ENCODE measurements at regions of chr5 and their contacts with region 1.

Region 1: DNA sequence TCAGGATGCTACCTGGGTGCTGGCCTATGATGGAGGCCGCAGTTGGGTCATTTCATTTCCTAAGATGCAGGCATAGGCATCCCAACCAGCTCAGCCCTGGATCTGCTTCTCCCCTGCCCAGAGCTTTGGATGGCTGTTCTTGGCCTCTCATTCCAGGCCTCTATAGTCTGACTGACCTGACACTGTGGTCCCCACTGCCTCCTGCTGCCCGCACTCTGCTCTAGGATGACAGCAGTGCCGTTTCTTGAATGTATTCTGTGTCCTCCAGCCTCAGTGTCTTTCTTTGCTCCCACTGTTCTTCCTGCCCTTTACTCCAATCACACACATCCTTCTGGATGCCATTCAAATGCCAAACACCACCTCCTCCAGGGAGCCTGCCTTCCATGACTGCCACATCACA is 235.7 kb downstream of the HSPA4 start:
- DNase-seq: peak in 1 of 2 donors; percentile 74
- ATAC-seq: peak in 1 of 2 donors; percentile 39
- H3K4me3 ChIP-seq: no peak overlapping the region
- H3K27ac ChIP-seq: peak overlapping the region in 1 of 4 donors; percentile 90
- H3K4me1 ChIP-seq: peaks cover 7 to 15% of the 10 kb centered on the region in 2 donors
- H3K27me3 ChIP-seq: no peaks in the 10 kb centered on the region
- CTCF ChIP-seq: peak; percentile 44 to 78 (median 74)
- POLR2A ChIP-seq: no peak

Region 2: DNA sequence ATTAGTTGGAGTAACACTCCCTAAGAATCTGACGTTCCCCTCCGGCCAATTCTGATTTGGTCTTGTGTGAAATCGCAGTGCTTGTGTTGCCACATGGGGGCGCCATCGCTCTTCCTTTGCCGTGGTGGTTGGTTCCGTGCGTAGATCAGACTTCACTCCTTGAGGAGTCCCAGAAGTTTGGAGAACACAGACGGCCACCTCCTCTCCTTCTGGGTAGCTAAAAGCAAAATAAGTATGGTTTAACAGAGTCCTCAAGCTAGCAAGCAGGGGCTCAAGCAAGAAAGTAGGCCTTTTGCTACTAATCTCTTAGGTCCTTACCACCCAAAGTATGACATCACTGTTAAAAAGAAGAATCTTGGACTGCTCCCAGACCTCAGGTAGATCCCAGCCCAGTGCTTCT is 176.2 kb before region 1 on chr5:
- in situ Hi-C with region 1: loop called (anchors 5 to 10 kb)
- intact Hi-C with region 1: loop called (anchors 1 kb)
- DNase-seq: peak; percentile 63 to 80
- ATAC-seq: peak; percentile 73 to 83
- H3K4me3 ChIP-seq: no peak overlapping the region
- H3K27ac ChIP-seq: no peak overlapping the region
- H3K4me1 ChIP-seq: peaks cover 21 to 26% of the 10 kb centered on the region in 2 donors
- H3K27me3 ChIP-seq: no peaks in the 10 kb centered on the region
- CTCF ChIP-seq: peak; percentile 89 to 94 (median 92)
- POLR2A ChIP-seq: no peak

Region 3: GRCh38 chr5:133119233-133119711 is 168.2 kb before region 1 on chr5:
- in situ Hi-C with region 1: loop called (anchors 5 to 10 kb)
- intact Hi-C with region 1: loop called (anchors 2 kb)
- DNase-seq: peak; percentile 81 to 94
- ATAC-seq: peak; percentile 84 to 85
- H3K4me3 ChIP-seq: no peak overlapping the region
- H3K27ac ChIP-seq: peak overlapping the region; percentile 92 to 95 (median 94)
- H3K4me1 ChIP-seq: peaks cover 61 to 72% of the 10 kb centered on the region in 2 donors
- H3K27me3 ChIP-seq: no peaks in the 10 kb centered on the region
- CTCF ChIP-seq: no peak
- POLR2A ChIP-seq: peak in 1 of 2 donors; percentile 19

Region 4: DNA sequence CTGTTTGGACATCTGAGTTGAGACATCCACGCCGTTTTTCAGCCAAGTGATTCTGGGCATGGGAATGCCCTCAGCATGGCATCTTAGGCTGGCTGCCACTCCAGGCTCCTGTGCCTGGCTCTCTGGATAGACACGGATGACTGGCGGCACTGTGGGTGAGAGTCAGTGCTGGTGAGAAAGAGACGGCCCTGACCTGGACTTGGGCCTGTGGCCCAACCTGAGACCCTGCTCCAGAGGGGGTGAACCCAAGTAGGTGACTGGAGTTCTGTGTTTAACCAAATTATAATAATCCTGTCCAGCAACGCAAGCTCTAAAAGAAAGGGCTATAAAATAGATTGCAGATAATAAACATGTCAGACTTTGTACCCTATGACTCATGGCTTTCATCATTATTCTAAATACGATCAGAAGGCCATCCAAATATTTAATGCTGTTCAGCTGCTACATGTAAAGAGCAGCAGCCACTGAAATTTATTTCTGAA is 61.8 kb before region 1 on chr5:
- in situ Hi-C with region 1: no loop called
- intact Hi-C with region 1: loop called (anchors 2 kb)
- DNase-seq: peak; percentile 66 to 87
- ATAC-seq: peak; percentile 96
- H3K4me3 ChIP-seq: no peak overlapping the region
- H3K27ac ChIP-seq: peak overlapping the region; percentile 69 to 84 (median 75)
- H3K4me1 ChIP-seq: peaks cover 8 to 13% of the 10 kb centered on the region in 2 donors
- H3K27me3 ChIP-seq: no peaks in the 10 kb centered on the region
- CTCF ChIP-seq: no peak
- POLR2A ChIP-seq: no peak

Region 5: DNA sequence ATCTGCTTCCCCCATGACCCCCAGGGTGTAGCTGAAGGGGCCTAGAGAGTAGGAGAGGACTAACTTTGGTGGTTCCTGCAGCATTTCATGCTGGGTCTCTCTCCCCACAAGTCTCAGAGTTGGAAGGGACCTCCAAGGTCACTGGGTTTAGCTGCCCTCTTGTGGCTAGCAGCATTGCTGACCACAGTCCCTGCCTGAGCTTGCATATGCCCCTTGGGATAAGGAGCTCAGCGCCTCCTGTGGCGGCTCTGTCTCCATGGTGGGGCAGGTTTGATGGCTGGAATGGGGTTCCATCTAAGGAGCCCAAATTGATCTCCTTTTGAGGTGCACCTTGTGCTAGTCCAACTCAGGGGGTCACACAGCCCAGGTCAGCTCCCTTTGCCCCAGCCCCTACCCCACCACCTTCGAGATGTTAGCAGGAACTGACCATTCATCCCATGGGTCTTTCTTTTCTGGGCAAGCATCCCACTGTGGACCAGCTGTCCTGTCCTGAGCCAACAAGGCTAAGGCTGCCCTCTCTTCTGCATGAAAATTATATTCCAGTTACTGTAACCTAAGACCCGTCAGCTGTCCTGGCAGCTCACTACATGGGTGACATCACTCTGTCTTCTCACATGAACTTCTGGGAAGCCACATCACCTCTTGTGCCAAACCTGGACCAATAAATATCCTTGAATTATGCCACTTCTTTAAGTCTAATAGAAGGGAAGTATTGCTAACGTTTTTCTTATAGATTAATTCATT is 39.4 kb before region 1 on chr5:
- in situ Hi-C with region 1: no loop called
- intact Hi-C with region 1: loop called (anchors 5 kb)
- DNase-seq: peak; percentile 82 to 93
- ATAC-seq: peak; percentile 95 to 97
- H3K4me3 ChIP-seq: no peak overlapping the region
- H3K27ac ChIP-seq: peak overlapping the region; percentile 56 to 76 (median 66)
- H3K4me1 ChIP-seq: peaks cover 16 to 23% of the 10 kb centered on the region in 2 donors
- H3K27me3 ChIP-seq: no peaks in the 10 kb centered on the region
- CTCF ChIP-seq: peak; percentile 37 to 58 (median 51)
- POLR2A ChIP-seq: no peak

Region 6: DNA sequence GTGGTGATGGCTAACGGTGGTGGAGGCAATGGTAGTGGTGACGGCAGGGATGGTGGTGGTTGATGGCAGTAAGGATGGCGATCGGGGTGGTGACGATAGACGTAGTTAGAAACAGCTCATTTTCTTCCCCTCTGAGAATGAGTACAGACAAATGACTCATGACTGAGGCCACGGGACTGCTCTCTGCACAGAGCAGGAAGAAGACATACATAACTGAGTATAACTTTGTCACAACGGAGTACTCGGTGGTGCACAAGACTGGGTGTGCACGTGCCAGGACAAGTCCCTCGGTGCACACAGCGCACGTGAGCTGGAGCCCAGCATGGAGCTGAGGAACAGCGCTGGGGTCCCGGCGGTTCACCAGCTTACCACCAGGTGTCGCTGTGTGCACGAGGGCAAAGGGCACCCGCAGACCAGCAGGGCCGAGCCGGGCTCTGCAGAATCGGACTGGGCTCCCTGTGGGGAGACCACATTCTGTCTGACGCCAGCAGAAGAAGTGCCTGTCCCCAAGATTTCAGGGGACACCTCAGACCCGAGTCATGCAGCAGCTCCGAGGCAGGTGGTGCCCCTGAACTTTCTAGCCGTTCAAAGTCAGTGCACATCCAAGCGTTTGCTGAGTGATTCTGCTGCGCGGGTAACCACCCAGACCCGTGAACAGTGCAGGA is 136.2 kb after region 1 on chr5:
- in situ Hi-C with region 1: no loop called
- intact Hi-C with region 1: no loop called
- DNase-seq: peak; percentile 26 to 29
- ATAC-seq: peak; percentile 50 to 72
- H3K4me3 ChIP-seq: no peak overlapping the region
- H3K27ac ChIP-seq: no peak overlapping the region
- H3K4me1 ChIP-seq: no peaks in the 10 kb centered on the region
- H3K27me3 ChIP-seq: no peaks in the 10 kb centered on the region
- CTCF ChIP-seq: peak; percentile 76 to 88 (median 81)
- POLR2A ChIP-seq: no peak